A549 (cell line): ENCODE measurements at regions of chr9 and their contacts with region 1.

Region 1: DNA sequence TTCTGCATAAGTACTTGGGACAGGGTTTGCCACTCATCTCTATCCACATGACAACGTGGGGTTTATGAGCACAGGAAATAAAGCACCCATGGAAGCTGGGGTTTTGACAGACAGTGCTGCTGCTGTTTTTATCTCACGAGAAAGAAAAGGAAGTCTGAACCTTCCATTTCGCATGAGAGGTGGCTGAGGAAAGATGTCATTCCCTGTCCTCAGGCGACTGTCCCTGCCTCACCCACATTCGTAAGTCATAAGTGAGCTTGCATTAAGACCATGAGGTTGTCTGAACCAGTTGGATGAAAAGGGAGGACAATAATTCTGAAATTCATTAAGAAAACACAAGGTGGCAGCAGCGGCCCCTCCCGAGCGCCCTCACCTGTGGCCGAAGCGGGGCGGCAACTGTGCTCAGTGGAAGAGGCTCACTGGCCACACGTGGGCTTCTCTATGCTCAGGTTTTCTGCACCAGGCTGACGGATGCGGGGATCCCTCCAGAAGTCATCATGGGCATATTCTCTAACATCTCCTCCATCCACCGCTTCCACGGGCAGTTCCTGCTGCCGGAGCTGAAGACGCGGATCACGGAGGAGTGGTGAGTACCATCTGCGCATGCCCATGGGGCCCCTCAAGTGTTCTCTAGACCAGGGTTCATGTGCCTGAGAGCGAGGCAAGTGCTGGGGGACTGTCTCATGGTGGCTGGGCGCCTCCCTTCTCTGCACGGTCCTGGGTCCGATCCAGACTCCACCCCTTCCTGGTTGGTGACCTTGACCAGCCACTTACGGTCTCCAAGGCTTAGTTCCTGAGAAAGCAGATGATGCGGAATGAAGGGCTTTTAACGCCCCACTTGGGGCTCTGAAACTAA is 54.7 kb upstream of the SUSD3 start:
- DNase-seq: peak; percentile 72 to 73
- ATAC-seq: peak; percentile 94 to 97
- H3K4me3 ChIP-seq: peak overlapping the region; percentile 52
- H3K27ac ChIP-seq: peak overlapping the region; percentile 71 to 83
- H3K4me1 ChIP-seq: 0 out of 3 replicates have a peak, but pooled peaks cover 6% of the 10 kb centered on the region
- CTCF ChIP-seq: peak; percentile 90
- EP300 ChIP-seq: no peak
- POLR2A ChIP-seq: no peak
- RAD21 ChIP-seq: peak; percentile 83 to 86

Region 2: DNA sequence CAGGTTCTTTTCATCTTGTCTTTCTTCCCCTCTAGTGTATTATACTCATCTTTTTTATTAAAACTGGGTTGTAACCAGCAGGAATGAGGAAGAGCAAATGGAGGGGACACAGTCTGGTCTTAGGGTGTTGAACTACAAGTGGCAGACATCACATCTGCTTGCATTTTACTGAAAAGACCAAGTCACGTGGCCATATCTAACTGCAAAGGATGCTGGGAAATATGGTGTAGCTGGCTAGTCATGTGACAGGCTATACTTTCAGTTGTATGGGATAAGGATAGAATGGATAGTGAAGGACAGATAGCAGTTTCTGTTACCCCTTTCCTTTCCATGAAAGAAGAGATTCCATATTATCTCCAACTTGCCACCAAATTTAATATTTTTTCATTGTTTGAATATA is 69.5 kb before region 1 on chr9:
- CTCF ChIA-PET with region 1: no interaction called
- POLR2A ChIA-PET with region 1: no interaction called
- DNase-seq: peak in 1 of 2 experiments; percentile 37
- ATAC-seq: no peak
- H3K4me3 ChIP-seq: no peak overlapping the region
- H3K27ac ChIP-seq: no peak overlapping the region
- H3K4me1 ChIP-seq: no peaks in the 10 kb centered on the region; the same call in 2 of the 3 replicates
- CTCF ChIP-seq: no peak
- EP300 ChIP-seq: no peak
- POLR2A ChIP-seq: no peak
- RAD21 ChIP-seq: no peak

Region 3: GRCh38 chr9:92954049-92954861 is 49.5 kb before region 1 on chr9:
- CTCF ChIA-PET with region 1: interaction called, 11 read pairs
- POLR2A ChIA-PET with region 1: no interaction called
- DNase-seq: no peak
- ATAC-seq: no peak
- H3K4me3 ChIP-seq: no peak overlapping the region
- H3K27ac ChIP-seq: no peak overlapping the region
- H3K4me1 ChIP-seq: peaks cover 4% of the 10 kb centered on the region; the same call in 1 of the 3 replicates
- CTCF ChIP-seq: no peak
- EP300 ChIP-seq: no peak
- POLR2A ChIP-seq: no peak
- RAD21 ChIP-seq: no peak

Region 4: DNA sequence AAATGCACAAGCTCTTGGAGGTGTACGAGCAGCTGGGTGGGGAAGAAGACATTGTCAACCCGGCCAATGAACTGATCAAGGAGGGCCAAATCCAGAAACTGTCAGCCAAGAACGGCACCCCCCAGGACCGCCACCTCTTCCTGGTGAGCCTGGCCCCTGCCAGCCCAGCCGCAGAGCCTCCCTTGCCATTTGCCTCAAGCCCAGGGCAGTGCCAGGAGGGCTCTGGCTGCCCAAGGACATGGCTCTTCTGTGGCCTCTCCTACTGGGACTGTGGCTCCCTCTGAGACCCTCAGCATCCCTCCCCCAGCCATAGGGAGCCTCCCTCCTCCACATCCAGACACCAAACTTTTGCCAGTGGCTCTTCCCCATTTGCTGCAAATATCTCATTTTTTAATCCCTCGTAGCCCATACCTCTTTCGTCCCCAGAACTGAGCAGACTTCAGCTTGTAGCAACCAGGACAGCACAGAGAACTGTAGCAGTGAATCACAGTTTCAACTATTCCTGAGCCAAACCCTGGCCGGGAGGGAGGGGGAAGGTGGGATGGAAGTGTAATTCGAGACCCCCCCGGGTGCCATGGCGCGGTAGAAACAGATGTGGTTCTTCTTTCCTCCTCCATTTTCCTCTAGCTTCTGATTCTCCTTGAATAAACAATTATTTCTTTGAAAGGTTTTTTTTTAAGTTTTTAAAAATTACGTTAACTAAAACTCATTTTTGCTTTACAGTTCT is 10.2 kb after region 1 on chr9:
- CTCF ChIA-PET with region 1: interaction called, 25 read pairs
- POLR2A ChIA-PET with region 1: no interaction called
- DNase-seq: no peak
- ATAC-seq: no peak
- H3K4me3 ChIP-seq: no peak overlapping the region
- H3K27ac ChIP-seq: no peak overlapping the region
- H3K4me1 ChIP-seq: no peaks in the 10 kb centered on the region
- CTCF ChIP-seq: no peak
- EP300 ChIP-seq: no peak
- POLR2A ChIP-seq: no peak
- RAD21 ChIP-seq: no peak

Region 5: DNA sequence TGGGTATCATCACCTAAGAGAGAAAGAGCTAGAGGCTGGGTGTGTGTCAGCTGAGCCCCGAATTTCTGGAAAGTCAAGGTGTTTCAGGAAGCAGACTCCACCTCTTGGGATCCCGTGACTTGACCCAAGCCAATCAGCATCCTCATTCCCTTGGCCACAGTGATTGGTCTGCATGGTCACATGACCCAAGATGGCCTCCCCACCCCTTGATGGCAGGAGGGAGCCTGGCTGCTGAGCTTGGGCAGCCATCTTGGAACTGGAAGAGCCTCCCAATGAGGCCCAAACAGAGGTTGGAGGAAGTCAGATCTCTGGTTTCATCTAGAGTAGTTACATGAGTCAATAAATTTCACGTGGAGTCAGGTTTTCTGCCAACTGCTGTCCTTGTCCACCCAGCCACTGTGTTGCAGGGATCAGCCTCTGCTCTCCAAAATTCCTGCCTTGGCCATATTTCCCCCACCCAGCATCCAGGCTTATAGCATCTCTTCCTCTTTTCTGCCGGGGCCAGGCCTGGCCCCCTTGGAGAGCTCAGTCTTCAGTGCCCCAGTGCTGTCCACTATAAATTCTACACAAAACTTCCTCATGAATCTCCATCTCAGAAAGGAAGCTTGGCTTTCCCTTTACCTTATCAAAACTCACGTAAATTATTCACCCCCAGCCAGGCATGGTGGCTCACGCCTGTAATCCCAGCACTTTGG is 37.5 kb after region 1 on chr9:
- CTCF ChIA-PET with region 1: interaction called, 22 read pairs
- POLR2A ChIA-PET with region 1: no interaction called
- DNase-seq: peak; percentile 55 to 59
- ATAC-seq: peak in 1 of 2 experiments; percentile 65; a peak in 3 of 6 replicates
- H3K4me3 ChIP-seq: no peak overlapping the region
- H3K27ac ChIP-seq: no peak overlapping the region
- H3K4me1 ChIP-seq: no peaks in the 10 kb centered on the region
- CTCF ChIP-seq: no peak
- EP300 ChIP-seq: no peak
- POLR2A ChIP-seq: no peak
- RAD21 ChIP-seq: no peak

Region 6: GRCh38 chr9:93302551-93303257 is 298.9 kb after region 1 on chr9:
- CTCF ChIA-PET with region 1: interaction called, 43 read pairs
- POLR2A ChIA-PET with region 1: no interaction called
- DNase-seq: peak; percentile 73 to 74
- ATAC-seq: peak; percentile 71 to 88
- H3K4me3 ChIP-seq: no peak overlapping the region
- H3K27ac ChIP-seq: 0 out of 6 replicates have a peak overlapping the region, but pooled peaks of 1 of the 2 experiments have one; percentile 46
- H3K4me1 ChIP-seq: peaks cover 4% of the 10 kb centered on the region; the same call in 1 of the 3 replicates
- CTCF ChIP-seq: peak; percentile 66
- EP300 ChIP-seq: no peak
- POLR2A ChIP-seq: no peak
- RAD21 ChIP-seq: peak; percentile 72 to 74